ENCODE measurements at regions of chr18 and their contacts with region 1.

Region 1: DNA sequence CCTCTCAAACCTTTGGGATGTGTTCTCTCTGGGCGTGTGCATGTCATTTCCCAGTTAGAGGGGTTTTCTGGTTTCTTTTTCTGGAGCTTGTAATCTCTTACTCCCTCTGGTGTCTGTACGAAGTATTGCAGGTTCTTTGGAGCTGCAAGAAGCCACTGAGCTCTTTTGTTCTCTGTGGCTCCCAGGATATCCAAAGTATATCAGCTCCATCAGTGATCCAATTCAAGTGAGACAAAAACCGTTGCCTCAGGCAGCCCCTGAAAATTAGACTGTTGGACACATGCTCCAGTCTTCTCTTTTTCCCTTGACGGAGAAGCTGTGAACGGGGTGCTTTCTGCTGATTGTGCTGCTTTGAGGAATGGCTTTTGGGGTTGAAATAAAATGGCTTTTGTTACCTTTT is 59.0 kb upstream of the LDLRAD4 start:
- DNase-seq: no peak
- ATAC-seq: peak; percentile 79
- H3K4me3 ChIP-seq: no peak overlapping the region
- H3K27ac ChIP-seq: no peak overlapping the region
- H3K4me1 ChIP-seq: no peaks in the 10 kb centered on the region
- H3K27me3 ChIP-seq: no peaks in the 10 kb centered on the region; a peak in 1 of 4 replicates
- CTCF ChIP-seq: peak; percentile 73 to 80 (median 74)
- EP300 ChIP-seq: no peak
- POLR2A ChIP-seq: no peak
- RAD21 ChIP-seq: peak; percentile 70

Region 2: DNA sequence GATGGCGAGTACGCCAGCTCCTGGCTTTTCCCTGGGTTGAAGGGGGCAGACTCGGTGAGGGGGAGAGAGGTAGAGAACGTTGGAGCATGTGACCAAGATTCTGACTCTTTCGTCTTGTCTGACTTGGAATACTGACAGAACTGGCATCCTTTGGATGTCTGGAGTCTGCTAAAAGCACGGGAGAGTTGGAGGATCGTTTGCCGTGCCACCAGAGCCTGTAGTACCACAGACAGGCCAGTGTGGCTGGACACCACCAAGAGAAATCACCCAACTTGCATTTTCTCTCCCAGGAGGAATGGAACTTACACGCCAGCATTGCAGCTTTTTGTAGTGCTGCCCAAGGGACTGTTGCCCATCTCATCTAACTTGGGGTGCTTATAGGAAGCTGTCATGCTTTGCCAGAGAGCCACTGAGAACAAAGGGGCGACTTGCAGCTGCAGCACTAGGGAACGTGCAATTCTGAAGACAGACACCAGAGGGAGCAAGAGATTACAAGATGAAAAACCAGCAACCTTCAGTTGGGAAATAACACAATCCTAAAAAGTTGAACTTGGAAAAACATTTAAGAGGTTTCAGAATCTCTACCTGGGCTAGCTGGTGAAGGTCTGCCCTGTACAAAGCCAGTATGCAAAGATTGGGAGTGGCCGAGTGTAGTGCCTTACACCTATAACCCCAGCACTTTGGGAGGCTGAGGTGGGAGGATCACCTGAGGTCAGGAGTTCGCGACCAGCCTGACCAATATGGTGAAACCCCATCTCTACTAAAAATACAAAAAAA is 432.6 kb before region 1 on chr18:
- CTCF ChIA-PET with region 1: interaction called, 16 read pairs
- POLR2A ChIA-PET with region 1: no interaction called
- RAD21 ChIA-PET with region 1: interaction called, 18 read pairs
- SMC1A ChIA-PET with region 1: interaction called, 11 read pairs
- in situ Hi-C with region 1: loop called (anchors 5 kb)
- intact Hi-C with region 1: loop called (anchors 10 kb)
- DNase-seq: no peak
- ATAC-seq: peak; percentile 84
- H3K4me3 ChIP-seq: no peak overlapping the region
- H3K27ac ChIP-seq: no peak overlapping the region
- H3K4me1 ChIP-seq: no peaks in the 10 kb centered on the region
- H3K27me3 ChIP-seq: no peaks in the 10 kb centered on the region
- CTCF ChIP-seq: peak; percentile 82 to 84 (median 83)
- EP300 ChIP-seq: no peak
- POLR2A ChIP-seq: no peak; the same call in 1 of the 2 replicates
- RAD21 ChIP-seq: peak; percentile 84

Region 3: GRCh38 chr18:12934454-12935071 is 225.0 kb before region 1 on chr18:
- CTCF ChIA-PET with region 1: interaction called, 16 read pairs
- POLR2A ChIA-PET with region 1: no interaction called
- RAD21 ChIA-PET with region 1: interaction called, 9 read pairs
- SMC1A ChIA-PET with region 1: interaction called, 13 read pairs
- in situ Hi-C with region 1: no loop called
- intact Hi-C with region 1: no loop called
- DNase-seq: peak; percentile 34
- ATAC-seq: peak; percentile 96
- H3K4me3 ChIP-seq: no peak overlapping the region
- H3K27ac ChIP-seq: no peak overlapping the region
- H3K4me1 ChIP-seq: no peaks in the 10 kb centered on the region
- H3K27me3 ChIP-seq: no peaks in the 10 kb centered on the region; a peak in 2 of 4 replicates
- CTCF ChIP-seq: peak; percentile 95 to 99 (median 98); a peak in 5 of 6 replicates
- EP300 ChIP-seq: no peak
- POLR2A ChIP-seq: no peak
- RAD21 ChIP-seq: peak; percentile 100

Region 4: DNA sequence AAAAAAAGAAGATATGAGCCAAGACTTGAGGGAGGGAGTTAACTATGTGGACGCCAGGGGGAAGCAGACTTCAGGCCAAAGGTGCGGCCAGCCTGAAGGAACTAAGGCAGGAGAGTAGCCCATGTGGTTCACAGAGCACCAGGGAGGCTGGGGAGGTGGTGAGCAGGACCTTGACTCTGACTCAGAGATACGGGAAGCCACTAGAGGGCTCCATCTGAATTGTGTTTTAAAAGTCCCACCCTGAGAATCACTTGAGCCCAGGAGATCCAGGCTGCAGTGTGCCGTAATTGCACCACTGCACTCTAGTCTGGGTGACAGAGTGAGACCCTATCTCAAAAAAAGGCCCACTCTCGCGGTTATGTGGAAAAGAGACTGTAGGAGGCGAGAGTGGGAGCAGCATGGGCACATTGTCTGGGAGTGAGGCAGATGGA is 156.1 kb before region 1 on chr18:
- CTCF ChIA-PET with region 1: interaction called, 17 read pairs
- POLR2A ChIA-PET with region 1: no interaction called
- RAD21 ChIA-PET with region 1: interaction called, 5 read pairs
- SMC1A ChIA-PET with region 1: interaction called, 3 read pairs
- in situ Hi-C with region 1: no loop called
- intact Hi-C with region 1: loop called (anchors 2 kb)
- DNase-seq: no peak
- ATAC-seq: peak; percentile 83
- H3K4me3 ChIP-seq: no peak overlapping the region
- H3K27ac ChIP-seq: no peak overlapping the region
- H3K4me1 ChIP-seq: peaks cover 20% of the 10 kb centered on the region
- H3K27me3 ChIP-seq: no peaks in the 10 kb centered on the region
- CTCF ChIP-seq: peak; percentile 52 to 57 (median 57); a peak in 5 of 6 replicates
- EP300 ChIP-seq: no peak
- POLR2A ChIP-seq: no peak
- RAD21 ChIP-seq: peak; percentile 37; the same call in 1 of the 2 replicates

Region 5: DNA sequence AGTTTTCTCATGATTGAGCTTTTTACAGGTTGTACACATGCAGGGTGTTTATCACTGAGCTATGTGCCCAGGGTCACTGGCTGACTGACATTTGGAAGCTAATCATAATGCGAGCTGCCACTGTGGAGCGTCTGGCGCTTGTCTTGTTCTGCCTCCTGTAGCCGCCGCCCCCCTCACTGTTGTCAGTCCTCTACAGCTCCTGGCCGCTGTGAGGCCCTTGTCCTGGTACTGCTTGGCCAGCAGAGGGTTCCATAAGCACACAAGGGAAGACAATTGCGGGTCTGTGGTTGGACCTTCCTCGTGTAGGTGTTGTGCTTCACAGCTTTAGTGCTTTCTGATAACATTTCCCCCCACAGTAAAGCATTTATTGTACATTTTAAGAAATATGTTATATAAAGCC is 46.6 kb before region 1 on chr18:
- CTCF ChIA-PET with region 1: interaction called, 21 read pairs
- POLR2A ChIA-PET with region 1: interaction called, 10 read pairs
- RAD21 ChIA-PET with region 1: interaction called, 11 read pairs
- SMC1A ChIA-PET with region 1: interaction called, 13 read pairs
- in situ Hi-C with region 1: no loop called
- intact Hi-C with region 1: no loop called
- DNase-seq: no peak
- ATAC-seq: peak; percentile 63
- H3K4me3 ChIP-seq: no peak overlapping the region
- H3K27ac ChIP-seq: no peak overlapping the region
- H3K4me1 ChIP-seq: no peaks in the 10 kb centered on the region
- H3K27me3 ChIP-seq: no peaks in the 10 kb centered on the region
- CTCF ChIP-seq: peak in 2 of 3 experiments; percentile 23 to 24; a peak in 2 of 6 replicates
- EP300 ChIP-seq: no peak
- POLR2A ChIP-seq: no peak
- RAD21 ChIP-seq: peak; percentile 20; the same call in 1 of the 2 replicates

Region 6: DNA sequence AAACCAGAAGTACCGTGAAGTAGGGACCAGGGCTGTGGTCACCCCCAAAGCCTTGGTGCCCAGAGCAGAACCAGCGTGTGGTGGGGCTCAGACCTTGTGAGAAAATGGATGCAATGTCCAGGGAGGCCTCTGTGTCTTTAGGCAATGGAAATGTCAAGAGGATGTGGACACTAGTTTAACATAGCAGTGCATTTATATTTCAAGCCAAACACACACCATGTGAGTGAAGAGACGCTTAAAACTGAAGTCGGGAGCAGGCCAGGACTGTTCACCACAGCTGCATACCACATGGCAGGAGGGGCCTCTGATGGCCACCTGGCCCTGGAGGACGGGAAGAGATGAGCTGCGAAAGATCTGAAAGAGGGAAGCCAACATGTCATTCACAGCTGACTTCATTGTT is 28.3 kb before region 1 on chr18:
- CTCF ChIA-PET with region 1: interaction called, 17 read pairs
- POLR2A ChIA-PET with region 1: no interaction called
- RAD21 ChIA-PET with region 1: interaction called, 10 read pairs
- SMC1A ChIA-PET with region 1: interaction called, 9 read pairs
- in situ Hi-C with region 1: no loop called
- intact Hi-C with region 1: no loop called
- DNase-seq: no peak
- ATAC-seq: no peak
- H3K4me3 ChIP-seq: no peak overlapping the region
- H3K27ac ChIP-seq: no peak overlapping the region
- H3K4me1 ChIP-seq: peaks cover under 1% of the 10 kb centered on the region; the same call in 1 of the 2 replicates
- H3K27me3 ChIP-seq: no peaks in the 10 kb centered on the region
- CTCF ChIP-seq: no peak
- EP300 ChIP-seq: no peak
- POLR2A ChIP-seq: no peak
- RAD21 ChIP-seq: no peak

Region 7: GRCh38 chr18:13147130-13147529 is 12.4 kb before region 1 on chr18:
- CTCF ChIA-PET with region 1: interaction called, 12 read pairs
- POLR2A ChIA-PET with region 1: interaction called, 3 read pairs
- RAD21 ChIA-PET with region 1: interaction called, 5 read pairs
- SMC1A ChIA-PET with region 1: interaction called, 9 read pairs
- in situ Hi-C with region 1: no loop called
- intact Hi-C with region 1: no loop called
- DNase-seq: no peak
- ATAC-seq: peak; percentile 80
- H3K4me3 ChIP-seq: no peak overlapping the region
- H3K27ac ChIP-seq: no peak overlapping the region
- H3K4me1 ChIP-seq: no peaks in the 10 kb centered on the region
- H3K27me3 ChIP-seq: no peaks in the 10 kb centered on the region
- CTCF ChIP-seq: no peak
- EP300 ChIP-seq: no peak
- POLR2A ChIP-seq: no peak
- RAD21 ChIP-seq: no peak